IMR-90 (cell line): ENCODE measurements at regions of chr1 and their contacts with region 1.

Region 1: GRCh38 chr1:197915862-197916499 is 1.2 kb upstream of the LHX9 start:
- DNase-seq: peak; percentile 61
- ATAC-seq: peak; percentile 75
- H3K4me3 ChIP-seq: peak overlapping the region; percentile 12
- H3K27ac ChIP-seq: no peak overlapping the region
- H3K4me1 ChIP-seq: peaks cover 10% of the 10 kb centered on the region; the same call in 1 of the 2 replicates
- H3K27me3 ChIP-seq: peaks cover 100% of the 10 kb centered on the region
- CTCF ChIP-seq: peak; percentile 67
- POLR2A ChIP-seq: no peak
- RAD21 ChIP-seq: peak; percentile 60

Region 2: DNA sequence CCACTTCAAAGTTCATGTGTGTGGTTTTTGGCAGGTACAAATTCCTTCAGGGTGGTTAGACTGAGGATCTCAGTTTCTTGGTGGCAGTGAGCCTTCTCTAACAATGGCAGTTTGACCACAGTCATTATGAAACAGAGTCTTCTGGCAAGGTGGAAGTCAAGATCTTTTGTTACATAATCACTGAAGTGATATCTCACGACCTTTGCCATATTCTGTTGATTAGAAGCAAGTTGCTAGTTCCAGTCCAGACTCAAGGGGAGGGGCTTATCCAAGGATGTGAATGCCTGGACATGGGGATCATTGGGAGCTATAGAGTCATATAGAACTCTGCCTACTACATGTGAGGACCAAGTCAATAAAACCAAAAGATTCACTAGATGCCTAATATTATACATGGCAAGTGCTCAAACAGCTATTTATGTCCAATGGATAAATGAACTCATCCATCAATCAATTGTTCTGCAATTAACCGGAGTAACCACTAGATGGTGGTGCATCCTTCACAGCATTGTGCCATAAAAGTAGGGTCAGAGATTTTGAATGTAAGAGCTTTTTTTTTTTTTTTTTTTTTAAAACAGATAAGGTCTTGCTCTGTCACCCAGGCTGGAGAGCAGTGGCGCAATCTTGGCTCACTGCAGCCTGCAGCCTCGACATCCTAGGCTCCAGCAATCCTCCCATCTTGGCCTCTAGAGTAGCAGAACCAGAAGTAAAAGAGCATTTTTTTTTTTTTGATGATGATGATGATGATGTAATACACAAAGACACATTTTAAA is 516.0 kb before region 1 on chr1:
- CTCF ChIA-PET with region 1: no interaction called
- POLR2A ChIA-PET with region 1: no interaction called
- dilution Hi-C with region 1: no loop called
- in situ Hi-C with region 1: no loop called
- intact Hi-C with region 1: loop called (anchors 10 kb)
- DNase-seq: peak; percentile 51
- ATAC-seq: peak; percentile 66
- H3K4me3 ChIP-seq: no peak overlapping the region
- H3K27ac ChIP-seq: no peak overlapping the region
- H3K4me1 ChIP-seq: no peaks in the 10 kb centered on the region
- H3K27me3 ChIP-seq: no peaks in the 10 kb centered on the region; the same call in 1 of the 2 replicates
- CTCF ChIP-seq: peak; percentile 57
- POLR2A ChIP-seq: no peak
- RAD21 ChIP-seq: peak; percentile 51

Region 3: GRCh38 chr1:197614916-197615692 is 300.9 kb before region 1 on chr1:
- CTCF ChIA-PET with region 1: interaction called, 6 read pairs
- POLR2A ChIA-PET with region 1: no interaction called
- dilution Hi-C with region 1: no loop called
- in situ Hi-C with region 1: loop called (anchors 5 kb)
- intact Hi-C with region 1: loop called (anchors 2 kb)
- DNase-seq: peak; percentile 51
- ATAC-seq: peak; percentile 91
- H3K4me3 ChIP-seq: no peak overlapping the region
- H3K27ac ChIP-seq: no peak overlapping the region
- H3K4me1 ChIP-seq: 0 out of 2 replicates have a peak, but pooled peaks cover 2% of the 10 kb centered on the region
- H3K27me3 ChIP-seq: no peaks in the 10 kb centered on the region
- CTCF ChIP-seq: peak; percentile 66
- POLR2A ChIP-seq: no peak
- RAD21 ChIP-seq: peak; percentile 78

Region 4: DNA sequence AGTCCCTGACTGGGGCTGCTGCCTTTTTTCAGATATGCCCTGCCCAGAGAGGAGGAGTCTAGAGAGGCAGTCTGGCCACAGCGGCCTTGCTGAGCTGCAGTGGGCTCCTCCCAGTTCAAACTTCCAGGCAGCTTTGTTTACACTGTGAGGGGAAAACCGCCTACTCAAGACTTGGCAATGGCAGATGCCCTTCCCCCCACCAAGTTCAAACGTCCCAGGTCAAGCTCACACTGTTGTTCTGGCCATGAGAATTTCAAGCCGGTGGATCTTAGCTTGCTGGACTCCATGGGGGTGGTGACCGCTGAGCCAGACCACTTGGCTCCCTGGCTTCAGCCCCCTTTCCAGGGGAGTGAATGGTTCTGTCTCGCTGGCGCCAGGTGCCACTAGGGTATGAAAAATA is 31.8 kb before region 1 on chr1:
- CTCF ChIA-PET with region 1: no interaction called
- POLR2A ChIA-PET with region 1: interaction called, 3 read pairs
- dilution Hi-C with region 1: no loop called
- in situ Hi-C with region 1: no loop called
- intact Hi-C with region 1: loop called (anchors 1 kb)
- DNase-seq: no peak
- ATAC-seq: no peak
- H3K4me3 ChIP-seq: no peak overlapping the region
- H3K27ac ChIP-seq: no peak overlapping the region
- H3K4me1 ChIP-seq: no peaks in the 10 kb centered on the region
- H3K27me3 ChIP-seq: no peaks in the 10 kb centered on the region
- CTCF ChIP-seq: no peak
- POLR2A ChIP-seq: no peak
- RAD21 ChIP-seq: no peak

Region 5: GRCh38 chr1:198465201-198466144 is 549.5 kb after region 1 on chr1:
- CTCF ChIA-PET with region 1: interaction called, 3 read pairs
- POLR2A ChIA-PET with region 1: no interaction called
- dilution Hi-C with region 1: no loop called
- in situ Hi-C with region 1: loop called (anchors 10 kb)
- intact Hi-C with region 1: loop called (anchors 5 kb)
- DNase-seq: peak; percentile 70
- ATAC-seq: peak; percentile 88
- H3K4me3 ChIP-seq: no peak overlapping the region
- H3K27ac ChIP-seq: no peak overlapping the region
- H3K4me1 ChIP-seq: peaks cover 4% of the 10 kb centered on the region
- H3K27me3 ChIP-seq: no peaks in the 10 kb centered on the region
- CTCF ChIP-seq: peak; percentile 74
- POLR2A ChIP-seq: no peak
- RAD21 ChIP-seq: peak; percentile 85